ENCODE measurements at regions of chr19 and their contacts with region 1.

Region 1: GRCh38 chr19:15264061-15264932 is 32.0 kb upstream of the EPHX3 start:
- DNase-seq: peak; percentile 70 to 86 (median 75)
- ATAC-seq: peak in 3 of 4 donors; percentile 24 to 46 (median 25)
- H3K4me3 ChIP-seq: no peak overlapping the region
- H3K27ac ChIP-seq: peak overlapping the region in 11 of 12 donors; percentile 3 to 84 (median 55)
- H3K4me1 ChIP-seq: peaks cover 3 to 59% (median 52%) of the 10 kb centered on the region in 12 donors
- H3K27me3 ChIP-seq: no peaks in the 10 kb centered on the region
- CTCF ChIP-seq: peak; percentile 68 to 85 (median 78)
- POLR2A ChIP-seq: no peak

Region 2: GRCh38 chr19:15125232-15126067 is 138.8 kb before region 1 on chr19:
- intact Hi-C with region 1: no loop called
- DNase-seq: peak; percentile 98 to 99 (median 99)
- ATAC-seq: peak; percentile 91 to 93 (median 92)
- H3K4me3 ChIP-seq: peak overlapping the region; percentile 35 to 93 (median 72)
- H3K27ac ChIP-seq: peak overlapping the region; percentile 92 to 99 (median 96)
- H3K4me1 ChIP-seq: peaks cover 0 to 30% (median 16%) of the 10 kb centered on the region in 12 donors
- H3K27me3 ChIP-seq: no peaks in the 10 kb centered on the region
- CTCF ChIP-seq: peak in 3 of 12 donors; percentile 11 to 15 (median 15)
- POLR2A ChIP-seq: peak in 1 of 2 donors; percentile 50

Region 3: DNA sequence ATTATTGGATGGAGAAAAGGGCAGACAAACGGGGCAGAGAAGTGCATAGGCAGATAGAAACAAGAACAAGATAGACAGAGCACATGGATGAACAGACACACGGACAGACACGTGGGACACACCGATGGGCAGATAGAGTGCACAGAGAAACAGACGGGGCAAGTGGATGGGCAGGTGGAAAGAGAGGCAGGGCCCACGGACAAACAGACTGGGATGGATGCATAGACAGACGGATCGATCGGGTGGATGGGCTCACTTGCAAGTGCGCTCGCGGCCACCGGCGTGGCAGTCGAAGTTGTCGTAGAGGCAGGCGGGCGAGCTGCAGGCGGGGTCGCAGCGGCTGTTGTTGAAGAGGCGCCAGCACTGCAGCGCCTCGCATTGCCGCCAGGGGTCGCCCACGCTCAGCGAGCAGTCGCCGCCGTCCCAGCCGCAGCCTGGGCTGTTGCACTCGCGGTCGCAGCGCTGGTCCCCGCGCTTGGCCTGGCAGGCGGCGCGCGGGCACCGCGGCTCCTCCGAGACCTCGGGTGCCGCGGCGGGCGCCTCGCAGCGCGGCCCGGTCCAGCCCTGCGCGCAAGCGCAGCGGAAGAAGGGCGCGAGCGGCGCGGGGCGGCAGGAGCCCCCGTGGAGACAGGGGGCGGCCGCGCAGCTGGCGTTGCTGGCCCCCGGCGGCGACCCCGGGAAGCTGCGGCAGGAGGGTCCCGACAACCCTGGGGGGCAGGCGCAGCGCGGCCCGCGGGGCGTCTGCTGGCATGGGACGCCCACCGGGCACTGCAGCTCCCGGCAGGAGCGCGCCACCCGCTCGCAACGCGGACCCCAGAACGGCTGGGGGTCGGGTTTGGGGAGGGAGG is 86.8 kb before region 1 on chr19:
- intact Hi-C with region 1: loop called in 1 of 10 experiments (anchors 5 kb)
- DNase-seq: peak; percentile 76 to 93 (median 82)
- ATAC-seq: peak; percentile 41 to 91 (median 82)
- H3K4me3 ChIP-seq: peak overlapping the region in 7 of 12 donors; percentile 20 to 47 (median 34)
- H3K27ac ChIP-seq: peak overlapping the region in 1 of 12 donors; percentile 40
- H3K4me1 ChIP-seq: peaks cover 0 to 23% (median 2%) of the 10 kb centered on the region in 12 donors
- H3K27me3 ChIP-seq: peaks cover 0 to 11% (median 4%) of the 10 kb centered on the region in 9 donors
- CTCF ChIP-seq: peak; percentile 83 to 99 (median 96)
- POLR2A ChIP-seq: no peak

Region 4: GRCh38 chr19:15332311-15332996 is 68.2 kb after region 1 on chr19 and contains the start of gene BRD4:
- intact Hi-C with region 1: loop called in 6 of 10 experiments (anchors 5 to 10 kb)
- DNase-seq: peak; percentile 74 to 88 (median 84)
- ATAC-seq: peak; percentile 22 to 84 (median 80)
- H3K4me3 ChIP-seq: peak within 1 kb of the TSS; percentile 73 to 99 (median 96)
- H3K27ac ChIP-seq: peak within 1 kb of the TSS; percentile 84 to 97 (median 92)
- H3K4me1 ChIP-seq: peaks cover 6 to 67% (median 54%) of the 10 kb centered on the region in 12 donors
- H3K27me3 ChIP-seq: no peaks in the 10 kb centered on the region
- CTCF ChIP-seq: no peak
- POLR2A ChIP-seq: no peak
- total RNA-seq, gene BRD4: 31.4 to 78.9 (median 61.8) TPM

Region 5: DNA sequence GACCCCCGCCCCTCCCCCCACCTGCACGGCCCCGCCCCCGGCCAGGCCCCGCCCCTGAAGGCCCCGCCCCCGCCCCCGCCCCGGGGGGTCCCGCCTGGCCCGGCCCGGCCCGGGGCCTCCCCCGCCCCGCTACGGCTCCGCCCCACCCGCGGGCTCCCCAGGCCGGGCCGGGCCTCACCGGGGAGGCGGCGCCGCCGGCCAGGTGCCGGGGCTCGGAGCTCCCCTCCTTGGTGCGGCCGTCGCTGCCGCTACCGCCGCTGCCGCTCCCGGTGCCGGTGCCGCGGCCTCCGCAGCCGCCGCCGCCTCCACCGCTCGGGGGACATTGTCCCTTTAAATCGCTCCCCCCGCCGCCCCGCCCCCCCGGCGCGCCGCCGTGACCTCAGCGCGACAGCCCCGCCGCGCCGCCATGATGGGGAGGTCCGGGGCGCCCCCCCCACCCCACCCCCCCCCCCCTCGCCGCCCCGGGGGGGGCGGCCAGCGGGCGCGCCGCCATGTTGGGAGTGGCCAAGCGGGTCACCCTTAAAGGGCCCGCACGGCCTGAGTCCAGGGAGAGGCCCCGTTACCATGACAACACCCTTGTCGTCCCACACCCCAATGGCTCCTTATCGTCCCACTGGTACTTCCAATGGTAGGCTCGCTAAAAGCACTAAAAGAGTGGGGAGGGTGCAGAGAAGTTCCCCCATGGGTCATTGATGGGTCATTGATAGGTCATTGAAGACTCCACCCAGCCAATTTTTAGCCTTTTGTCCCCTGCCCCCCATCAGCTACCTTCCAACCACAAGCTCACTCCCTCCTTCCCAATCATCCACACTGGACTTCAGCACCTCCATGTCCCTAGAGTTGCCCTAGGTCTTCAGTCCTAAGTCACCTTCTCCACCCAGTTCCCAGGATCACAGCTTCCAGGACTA is 185.6 kb after region 1 on chr19 and contains the start of gene WIZ:
- intact Hi-C with region 1: loop called in 1 of 10 experiments (anchors 10 kb)
- DNase-seq: peak; percentile 88 to 94 (median 89)
- ATAC-seq: peak; percentile 5 to 41 (median 21)
- H3K4me3 ChIP-seq: peak within 1 kb of the TSS; percentile 65 to 95 (median 74)
- H3K27ac ChIP-seq: peak within 1 kb of the TSS; percentile 67 to 94 (median 86)
- H3K4me1 ChIP-seq: peaks cover 3 to 43% (median 20%) of the 10 kb centered on the region in 12 donors
- H3K27me3 ChIP-seq: peaks cover 0 to 9% (median 3%) of the 10 kb centered on the region in 9 donors
- CTCF ChIP-seq: no peak
- POLR2A ChIP-seq: peak in 1 of 2 donors; percentile 21
- total RNA-seq, gene WIZ: 23.1 to 52.4 (median 25.7) TPM

Measured in heart left ventricle (tissue), 16 donors.